Activated CD4-positive, alpha-beta T cell treated with anti-CD3 and anti-CD28 coated beads for 36 hours (primary cell): ENCODE measurements at regions of chr9 and their contacts with region 1.

Region 1: GRCh38 chr9:112333639-112334431 is 416 bp upstream of the PTBP3 start:
- DNase-seq: peak; percentile 97
- ATAC-seq: peak; percentile 84
- H3K4me3 Mint-ChIP-seq: peak overlapping the region; percentile 89
- H3K27ac Mint-ChIP-seq: peak overlapping the region; percentile 98
- H3K4me1 Mint-ChIP-seq: peaks cover 33% of the 10 kb centered on the region
- H3K27me3 Mint-ChIP-seq: no peaks in the 10 kb centered on the region

Region 2: GRCh38 chr9:111661150-111661801 is 672.6 kb before region 1 on chr9 and contains the start of gene GNG10:
- CTCF ChIA-PET with region 1: no interaction called
- POLR2A ChIA-PET with region 1: no interaction called
- intact Hi-C with region 1: loop called in 1 of 2 experiments (anchors 1 kb)
- DNase-seq: peak; percentile 81
- ATAC-seq: peak; percentile 92
- H3K4me3 Mint-ChIP-seq: peak within 1 kb of the TSS; percentile 98
- H3K27ac Mint-ChIP-seq: peak within 1 kb of the TSS; percentile 95
- H3K4me1 Mint-ChIP-seq: peaks cover 25% of the 10 kb centered on the region
- H3K27me3 Mint-ChIP-seq: no peaks in the 10 kb centered on the region
- total RNA-seq, gene GNG10: 14.5 to 15.4 TPM

Region 3: DNA sequence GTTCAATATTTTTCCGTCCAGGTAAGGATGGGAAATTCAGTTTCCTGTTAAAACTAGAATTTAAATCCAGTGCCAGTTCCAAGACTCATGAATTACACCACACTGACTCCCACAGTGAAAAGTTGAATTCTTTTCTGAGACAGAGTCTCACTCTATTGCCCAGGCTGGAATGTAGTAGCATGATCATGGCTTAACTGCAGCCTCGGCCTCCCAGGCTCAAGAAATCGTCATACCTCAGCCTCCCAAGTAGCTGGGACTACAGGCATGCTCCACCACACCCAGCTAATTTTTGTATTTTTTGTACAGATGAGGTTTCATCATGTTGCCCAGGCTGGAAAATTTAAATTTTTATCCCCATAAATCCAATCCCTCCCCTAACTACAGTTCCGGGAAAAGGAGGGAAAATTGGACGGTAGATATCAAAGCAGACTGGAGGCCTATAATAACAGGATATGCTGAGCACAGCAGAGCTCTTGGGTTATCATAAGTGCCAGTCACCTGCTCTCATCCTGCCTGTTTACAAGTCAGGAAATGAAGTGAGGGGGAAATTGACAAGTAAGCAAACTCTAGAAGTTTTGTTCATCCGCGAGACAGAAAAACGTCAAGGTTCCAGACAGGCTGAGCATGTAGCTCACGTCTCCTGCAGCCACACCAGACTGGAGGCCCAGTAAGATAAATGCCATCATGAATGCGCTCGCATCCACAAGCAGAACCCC is 331.5 kb before region 1 on chr9:
- CTCF ChIA-PET with region 1: no interaction called
- POLR2A ChIA-PET with region 1: no interaction called
- intact Hi-C with region 1: no loop called
- DNase-seq: peak; percentile 29
- ATAC-seq: peak; percentile 69
- H3K4me3 Mint-ChIP-seq: no peak overlapping the region
- H3K27ac Mint-ChIP-seq: no peak overlapping the region
- H3K4me1 Mint-ChIP-seq: peaks cover 36% of the 10 kb centered on the region
- H3K27me3 Mint-ChIP-seq: peaks cover 6% of the 10 kb centered on the region

Region 4: GRCh38 chr9:112097712-112098688 is 235.8 kb before region 1 on chr9:
- CTCF ChIA-PET with region 1: interaction called, 5 read pairs
- POLR2A ChIA-PET with region 1: no interaction called
- intact Hi-C with region 1: loop called (anchors 1 kb)
- DNase-seq: peak; percentile 82
- ATAC-seq: peak; percentile 90
- H3K4me3 Mint-ChIP-seq: no peak overlapping the region
- H3K27ac Mint-ChIP-seq: no peak overlapping the region
- H3K4me1 Mint-ChIP-seq: peaks cover 13% of the 10 kb centered on the region
- H3K27me3 Mint-ChIP-seq: no peaks in the 10 kb centered on the region

Region 5: DNA sequence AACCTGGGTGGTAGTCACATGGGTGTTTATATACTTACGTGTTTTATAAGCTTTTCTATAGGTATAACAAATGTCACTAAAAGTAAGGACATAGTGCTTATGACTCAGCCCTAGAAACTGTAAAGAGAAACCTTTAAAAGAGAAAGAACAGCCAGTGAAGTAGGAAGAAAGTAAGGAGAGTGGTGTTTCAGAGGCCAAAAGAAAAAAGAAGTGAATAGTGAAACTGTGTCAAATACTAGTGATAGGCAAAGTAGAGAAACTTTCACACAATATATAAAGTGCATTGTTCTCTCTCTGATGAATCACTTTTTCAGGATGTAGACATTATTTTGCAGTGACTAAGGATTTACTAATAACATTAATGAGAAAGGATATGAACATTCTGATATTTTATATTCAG is 84.6 kb before region 1 on chr9:
- CTCF ChIA-PET with region 1: no interaction called
- POLR2A ChIA-PET with region 1: no interaction called
- intact Hi-C with region 1: loop called in 1 of 2 experiments (anchors 5 kb)
- DNase-seq: no peak
- ATAC-seq: peak; percentile 90
- H3K4me3 Mint-ChIP-seq: no peak overlapping the region
- H3K27ac Mint-ChIP-seq: peak overlapping the region; percentile 17
- H3K4me1 Mint-ChIP-seq: peaks cover 32% of the 10 kb centered on the region
- H3K27me3 Mint-ChIP-seq: no peaks in the 10 kb centered on the region

Region 6: DNA sequence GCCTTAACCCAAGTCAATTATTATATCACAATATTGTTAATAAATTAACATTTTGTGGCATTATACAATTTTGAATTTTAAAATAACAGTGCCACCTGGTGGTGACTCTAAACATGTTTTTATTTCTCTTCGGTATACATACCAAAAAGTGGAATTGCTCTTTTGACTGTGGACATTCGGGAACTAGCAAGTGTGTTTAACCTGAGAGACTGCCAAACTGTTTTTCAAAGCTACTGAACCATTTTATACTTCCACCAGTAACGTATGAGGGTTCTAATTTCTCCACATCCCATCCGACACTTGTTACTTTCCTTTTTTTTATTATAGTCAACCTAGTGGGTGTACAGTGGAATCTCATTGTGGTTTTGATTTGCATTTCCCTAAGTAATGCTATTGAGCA is 27.8 kb after region 1 on chr9:
- CTCF ChIA-PET with region 1: interaction called, 8 read pairs
- POLR2A ChIA-PET with region 1: interaction called, 3 read pairs
- intact Hi-C with region 1: loop called (anchors 1 kb)
- DNase-seq: no peak
- ATAC-seq: no peak
- H3K4me3 Mint-ChIP-seq: no peak overlapping the region
- H3K27ac Mint-ChIP-seq: no peak overlapping the region
- H3K4me1 Mint-ChIP-seq: peaks cover 11% of the 10 kb centered on the region
- H3K27me3 Mint-ChIP-seq: peaks cover 6% of the 10 kb centered on the region

Region 7: GRCh38 chr9:112750111-112750767 is 416.4 kb after region 1 on chr9 and contains the start of gene SNX30:
- CTCF ChIA-PET with region 1: no interaction called
- POLR2A ChIA-PET with region 1: no interaction called
- intact Hi-C with region 1: loop called in 1 of 2 experiments (anchors 1 kb)
- DNase-seq: peak; percentile 83
- ATAC-seq: peak; percentile 45
- H3K4me3 Mint-ChIP-seq: peak within 1 kb of the TSS; percentile 83
- H3K27ac Mint-ChIP-seq: peak within 1 kb of the TSS; percentile 91
- H3K4me1 Mint-ChIP-seq: peaks cover 63% of the 10 kb centered on the region
- H3K27me3 Mint-ChIP-seq: no peaks in the 10 kb centered on the region
- total RNA-seq, gene SNX30: 4.2 to 4.6 TPM